Gastrocnemius medialis (tissue), 4 donors: ENCODE measurements at regions of chr3 and their contacts with region 1.

Region 1: DNA sequence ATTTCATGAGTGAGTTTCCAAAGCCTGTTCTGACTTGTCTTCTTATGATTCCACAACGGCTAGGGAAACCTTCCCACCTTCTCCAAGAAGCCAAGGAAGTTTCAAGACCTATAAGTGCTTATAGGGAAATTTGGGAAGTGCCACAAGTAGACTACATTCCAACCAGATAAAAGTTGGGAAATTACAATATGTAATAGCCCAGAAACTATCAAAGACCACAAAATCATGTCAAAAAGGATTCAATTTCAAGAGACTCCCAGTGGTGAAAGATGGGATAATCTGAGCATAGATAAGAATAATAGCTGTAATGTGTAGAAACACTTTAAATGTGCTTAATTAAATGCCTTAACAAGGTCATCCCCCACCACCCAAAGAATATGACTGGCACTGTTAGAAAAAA is 169.2 kb upstream of the SLC2A2 start:
- DNase-seq: no peak
- ATAC-seq: no peak
- H3K4me3 ChIP-seq: no peak overlapping the region
- H3K27ac ChIP-seq: no peak overlapping the region
- H3K4me1 ChIP-seq: peaks cover 32 to 47% of the 10 kb centered on the region in 2 donors
- H3K27me3 ChIP-seq: no peaks in the 10 kb centered on the region
- CTCF ChIP-seq: peak in 1 of 5 experiments; percentile 18
- POLR2A ChIP-seq: no peak

Region 2: GRCh38 chr3:171257251-171258203 is 61.8 kb after region 1 on chr3:
- in situ Hi-C with region 1: no loop called
- intact Hi-C with region 1: loop called (anchors 5 kb)
- DNase-seq: no peak
- ATAC-seq: peak; percentile 69 to 82
- H3K4me3 ChIP-seq: no peak overlapping the region
- H3K27ac ChIP-seq: peak overlapping the region; percentile 74 to 81 (median 80)
- H3K4me1 ChIP-seq: peaks cover 19 to 29% of the 10 kb centered on the region in 2 donors
- H3K27me3 ChIP-seq: no peaks in the 10 kb centered on the region
- CTCF ChIP-seq: no peak
- POLR2A ChIP-seq: no peak

Region 3: DNA sequence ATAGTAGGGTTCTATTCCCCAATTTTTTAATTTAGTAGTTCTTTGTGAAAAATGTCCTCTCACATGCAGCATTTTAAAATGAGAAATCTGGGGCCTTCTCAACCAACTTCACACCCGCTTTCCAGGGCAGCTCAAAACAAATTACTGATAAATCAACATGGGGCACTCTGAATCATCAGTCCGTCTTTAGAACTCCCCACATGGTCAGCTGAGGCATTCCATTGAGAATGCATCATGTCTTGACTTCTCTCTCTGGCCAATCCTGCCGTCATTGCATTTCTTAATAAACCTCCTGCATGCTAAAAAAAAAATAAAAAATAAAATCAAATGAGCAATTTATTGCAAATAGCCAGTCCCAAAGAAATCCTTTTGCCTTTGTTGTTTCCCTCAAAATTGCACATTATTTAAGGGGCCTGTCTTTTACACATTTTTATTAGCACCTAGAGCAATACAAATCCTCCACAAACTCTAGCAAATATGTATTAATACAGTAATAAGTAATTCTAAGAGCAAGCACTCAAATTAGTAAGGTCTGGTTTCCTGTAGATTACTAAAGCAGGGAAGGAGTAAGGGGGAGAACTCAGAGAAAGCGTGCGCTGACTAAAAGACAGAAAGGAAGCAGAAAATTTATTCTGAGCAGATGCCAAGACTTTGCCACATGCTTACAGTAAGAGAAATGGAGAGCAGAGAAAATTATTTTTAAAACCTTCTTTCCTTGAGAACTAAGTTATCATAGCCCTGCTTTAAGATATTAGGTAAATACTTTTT is 88.8 kb after region 1 on chr3:
- in situ Hi-C with region 1: no loop called
- intact Hi-C with region 1: loop called (anchors 5 kb)
- DNase-seq: peak; percentile 80 to 82
- ATAC-seq: peak; percentile 89 to 93
- H3K4me3 ChIP-seq: no peak overlapping the region
- H3K27ac ChIP-seq: peak overlapping the region; percentile 80 to 92 (median 82)
- H3K4me1 ChIP-seq: peaks cover 56 to 66% of the 10 kb centered on the region in 2 donors
- H3K27me3 ChIP-seq: no peaks in the 10 kb centered on the region
- CTCF ChIP-seq: no peak
- POLR2A ChIP-seq: peak in 1 of 2 donors; percentile 66

Region 4: DNA sequence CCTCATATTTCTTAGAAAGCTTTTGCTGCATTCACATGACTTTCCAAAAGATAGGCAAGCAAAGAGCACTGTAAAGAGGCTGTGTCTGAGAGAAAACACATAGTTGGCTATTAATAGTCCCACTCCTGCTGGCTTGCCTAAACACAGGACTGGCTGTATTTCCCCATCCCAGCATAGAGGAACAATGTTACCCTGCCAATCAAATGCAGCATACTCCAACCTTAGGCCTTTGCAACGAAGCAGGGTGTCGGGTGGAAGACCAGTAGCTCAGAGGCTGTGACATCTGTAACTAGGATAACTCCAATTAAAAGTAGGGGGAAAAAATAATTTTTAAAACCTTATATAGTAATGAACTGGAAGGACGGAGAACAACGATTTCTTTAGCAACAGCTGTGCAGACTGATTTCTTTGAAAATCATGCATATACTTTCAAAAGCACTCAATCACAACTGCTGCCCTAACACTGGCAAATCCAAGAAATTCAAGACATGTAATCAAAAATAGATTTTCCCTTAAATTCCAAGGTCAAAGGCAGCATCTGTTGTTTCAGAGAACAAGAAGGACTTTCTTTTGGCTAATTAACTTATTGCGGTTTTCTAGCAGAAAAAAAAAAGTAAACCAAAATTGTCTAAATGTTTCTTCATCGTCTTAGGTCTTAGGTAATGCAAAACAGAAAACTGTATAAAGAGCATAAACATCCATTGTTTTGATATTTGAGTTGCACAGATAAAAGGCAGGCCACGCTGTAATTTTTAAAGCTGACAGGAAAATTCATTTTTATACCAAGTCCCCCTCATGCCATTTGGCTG is 125.3 kb after region 1 on chr3:
- in situ Hi-C with region 1: no loop called
- intact Hi-C with region 1: loop called (anchors 5 kb)
- DNase-seq: peak; percentile 70 to 83
- ATAC-seq: peak; percentile 93 to 94
- H3K4me3 ChIP-seq: no peak overlapping the region
- H3K27ac ChIP-seq: peak overlapping the region; percentile 77 to 91 (median 87)
- H3K4me1 ChIP-seq: peaks cover 69 to 71% of the 10 kb centered on the region in 2 donors
- H3K27me3 ChIP-seq: no peaks in the 10 kb centered on the region
- CTCF ChIP-seq: no peak
- POLR2A ChIP-seq: no peak